ENCODE measurements at regions of chr17 and their contacts with region 1.

Region 1: DNA sequence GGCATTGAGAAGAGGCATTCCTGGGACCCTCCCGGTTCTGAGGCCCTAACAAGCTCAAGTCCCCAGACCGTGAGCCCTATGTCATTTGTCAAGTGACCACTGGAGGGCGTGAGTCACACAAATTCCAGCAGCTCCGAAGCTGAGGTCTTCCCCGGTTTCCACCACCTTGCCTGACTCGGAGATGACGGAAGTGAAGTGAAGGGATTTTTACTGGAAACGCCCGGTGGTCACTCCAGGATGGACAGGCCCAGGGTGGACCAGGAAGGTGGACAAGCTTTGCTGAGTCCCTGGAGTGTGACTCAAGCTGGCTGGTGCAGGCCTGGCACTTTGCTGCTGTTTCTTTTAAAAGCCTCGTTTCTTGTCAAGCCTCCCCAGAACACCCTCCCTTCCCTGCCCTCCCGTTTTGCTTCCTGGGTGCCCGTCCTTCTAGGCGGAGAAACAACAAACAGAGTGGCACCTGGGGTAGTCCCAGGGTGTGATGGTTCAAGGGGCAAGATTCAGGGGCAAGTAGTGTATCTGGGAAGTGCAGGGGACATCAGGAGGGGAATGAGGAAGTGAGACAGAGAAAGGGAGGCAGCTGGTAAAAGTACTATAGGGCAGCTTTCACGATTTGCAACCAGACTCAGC is 5.3 kb upstream of the NOS2 start:
- DNase-seq: peak; percentile 56 to 92 (median 74)
- ATAC-seq: peak; percentile 64 to 77 (median 66)
- H3K4me3 ChIP-seq: peak overlapping the region; percentile 50 to 66
- H3K4me3 Mint-ChIP-seq: peak overlapping the region; percentile 66 to 87 (median 78)
- H3K27ac ChIP-seq: peak overlapping the region; percentile 65
- H3K27ac Mint-ChIP-seq: peak overlapping the region; percentile 91 to 93
- H3K4me1 ChIP-seq: peaks cover 0 to 35% of the 10 kb centered on the region in 2 experiments
- H3K4me1 Mint-ChIP-seq: peaks cover 31 to 46% (median 41%) of the 10 kb centered on the region in 3 donors
- H3K27me3 ChIP-seq: no peaks in the 10 kb centered on the region
- H3K27me3 Mint-ChIP-seq: peaks cover 0 to 2% of the 10 kb centered on the region in 2 donors

Region 2: DNA sequence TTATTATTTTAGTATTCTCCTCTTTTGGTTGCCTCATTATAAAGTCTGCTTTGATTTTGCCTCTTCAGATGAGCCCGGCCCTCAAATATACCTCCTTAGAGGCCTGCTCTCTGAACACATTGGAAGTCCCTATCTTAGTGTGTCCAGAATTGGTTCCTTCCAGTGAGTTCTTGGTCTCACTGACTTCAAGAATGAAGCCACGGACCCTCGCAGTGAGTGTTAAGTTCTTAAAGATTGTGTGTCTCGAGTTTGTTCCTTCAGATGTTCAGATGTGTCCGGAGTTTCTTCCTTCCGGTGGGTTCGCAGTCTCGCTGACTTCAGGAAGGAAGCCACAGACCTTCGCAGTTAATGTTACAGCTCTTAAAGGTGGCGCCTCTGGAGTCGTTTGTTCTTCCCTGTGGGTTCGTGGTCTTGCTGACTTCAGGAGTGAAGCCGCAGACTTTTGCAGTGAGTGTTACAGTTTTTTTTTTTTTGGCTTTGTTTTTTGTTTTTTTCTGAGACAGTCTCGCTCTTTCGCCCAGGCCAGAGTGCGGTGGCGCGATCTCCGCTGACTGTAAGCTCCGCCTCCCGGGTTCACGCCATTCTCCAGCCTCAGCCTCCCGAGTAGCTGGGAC is 40.5 kb after region 1 on chr17:
- CTCF ChIA-PET with region 1: interaction called in 1 of 2 experiments, 16 read pairs
- POLR2A ChIA-PET with region 1: interaction called in 1 of 2 experiments, 3 read pairs
- DNase-seq: peak in 32 of 35 experiments; percentile 1 to 64 (median 22)
- ATAC-seq: peak; percentile 62 to 90 (median 74)
- H3K4me3 ChIP-seq: peak overlapping the region; percentile 25 to 33
- H3K4me3 Mint-ChIP-seq: peak overlapping the region; percentile 77 to 80 (median 77)
- H3K27ac ChIP-seq: peak overlapping the region; percentile 52
- H3K27ac Mint-ChIP-seq: peak overlapping the region; percentile 90 to 95
- H3K4me1 ChIP-seq: peaks cover 0 to 14% of the 10 kb centered on the region in 2 experiments
- H3K4me1 Mint-ChIP-seq: peaks cover 21 to 22% (median 22%) of the 10 kb centered on the region in 3 donors
- H3K27me3 ChIP-seq: no peaks in the 10 kb centered on the region
- H3K27me3 Mint-ChIP-seq: no peaks in the 10 kb centered on the region

Region 3: GRCh38 chr17:27879987-27880608 is 74.5 kb after region 1 on chr17:
- CTCF ChIA-PET with region 1: interaction called, 22 to 47 read pairs
- POLR2A ChIA-PET with region 1: interaction called in 1 of 2 experiments, 4 read pairs
- DNase-seq: peak in 34 of 35 experiments; percentile 23 to 76 (median 52)
- ATAC-seq: peak; percentile 66 to 86 (median 74)
- H3K4me3 ChIP-seq: no peak overlapping the region
- H3K4me3 Mint-ChIP-seq: peak overlapping the region in 1 of 3 donors; percentile 66
- H3K27ac ChIP-seq: no peak overlapping the region
- H3K27ac Mint-ChIP-seq: peak overlapping the region in 1 of 2 donors; percentile 43
- H3K4me1 ChIP-seq: peaks cover 12 to 18% of the 10 kb centered on the region in 2 experiments
- H3K4me1 Mint-ChIP-seq: peaks cover 18 to 22% (median 21%) of the 10 kb centered on the region in 3 donors
- H3K27me3 ChIP-seq: no peaks in the 10 kb centered on the region
- H3K27me3 Mint-ChIP-seq: no peaks in the 10 kb centered on the region

Region 4: DNA sequence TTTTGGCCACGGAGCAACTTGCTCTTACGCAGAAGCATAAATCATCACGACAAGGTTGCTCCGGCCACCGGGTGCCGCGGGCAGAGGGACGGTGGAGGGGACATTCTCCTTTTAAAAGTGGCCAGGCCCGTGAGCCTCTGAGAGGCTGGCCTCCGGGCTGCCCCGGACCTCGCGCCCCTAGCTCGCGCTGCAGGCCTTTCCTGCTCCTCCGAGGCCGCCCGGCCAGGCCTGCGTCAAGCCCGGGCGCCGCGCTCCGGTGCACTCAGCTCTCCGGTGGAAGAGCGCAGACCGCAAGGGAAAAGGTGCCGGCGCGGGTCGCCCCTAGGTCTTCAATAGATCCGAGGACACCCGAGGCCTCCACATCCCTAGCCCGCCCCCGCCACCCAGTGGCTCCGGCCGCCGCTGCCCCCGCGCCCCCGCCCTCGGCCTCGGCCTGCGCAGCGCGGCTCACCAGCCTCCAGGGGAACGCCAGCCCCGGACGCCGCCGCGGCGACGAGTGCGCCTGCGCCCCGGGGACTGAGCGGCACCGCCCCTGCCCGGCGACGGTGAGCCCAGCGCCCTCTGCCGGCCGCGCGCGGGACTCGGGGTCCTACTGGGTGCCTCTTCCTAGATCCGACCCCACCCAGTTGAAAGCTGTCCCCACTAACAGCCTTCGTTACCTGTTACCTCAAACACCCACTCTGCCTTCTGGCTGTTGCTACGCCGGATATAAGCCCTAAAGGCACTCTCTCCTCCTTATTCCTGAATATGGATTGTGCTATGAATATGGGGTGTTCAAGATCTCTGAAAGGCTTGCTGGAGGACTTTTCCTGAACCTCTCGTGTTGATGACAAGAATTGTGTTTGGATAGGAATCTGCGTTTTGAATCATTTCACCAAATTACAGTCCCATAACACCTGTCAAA is 87.5 kb after region 1 on chr17 and contains the start of gene LYRM9:
- CTCF ChIA-PET with region 1: interaction called, 9 to 94 read pairs
- POLR2A ChIA-PET with region 1: interaction called, 3 read pairs
- DNase-seq: peak; percentile 76 to 97 (median 89)
- ATAC-seq: peak; percentile 95 to 99 (median 96)
- H3K4me3 ChIP-seq: peak within 1 kb of the TSS; percentile 62 to 77
- H3K4me3 Mint-ChIP-seq: peak within 1 kb of the TSS; percentile 79 to 86 (median 80)
- H3K27ac ChIP-seq: peak within 1 kb of the TSS; percentile 37
- H3K27ac Mint-ChIP-seq: peak within 1 kb of the TSS; percentile 78 to 81
- H3K4me1 ChIP-seq: peaks cover 2 to 12% of the 10 kb centered on the region in 2 experiments
- H3K4me1 Mint-ChIP-seq: peaks cover 17 to 28% (median 22%) of the 10 kb centered on the region in 3 donors
- H3K27me3 ChIP-seq: peaks cover 0 to 6% of the 10 kb centered on the region in 2 experiments
- H3K27me3 Mint-ChIP-seq: peaks cover 8 to 26% of the 10 kb centered on the region in 2 donors
- total RNA-seq, gene LYRM9: 11.7 to 19.2 (median 14.2) TPM

Region 5: GRCh38 chr17:28169621-28170349 is 364.2 kb after region 1 on chr17:
- CTCF ChIA-PET with region 1: interaction called in 1 of 2 experiments, 3 read pairs
- POLR2A ChIA-PET with region 1: interaction called in 1 of 2 experiments, 10 read pairs
- DNase-seq: no peak
- ATAC-seq: no peak
- H3K4me3 ChIP-seq: no peak overlapping the region
- H3K4me3 Mint-ChIP-seq: no peak overlapping the region
- H3K27ac ChIP-seq: no peak overlapping the region
- H3K27ac Mint-ChIP-seq: no peak overlapping the region
- H3K4me1 ChIP-seq: peaks cover 0 to 20% of the 10 kb centered on the region in 2 experiments
- H3K4me1 Mint-ChIP-seq: peaks cover 20 to 22% (median 20%) of the 10 kb centered on the region in 3 donors
- H3K27me3 ChIP-seq: no peaks in the 10 kb centered on the region
- H3K27me3 Mint-ChIP-seq: no peaks in the 10 kb centered on the region

Region 6: GRCh38 chr17:28252436-28252835 is 446.8 kb after region 1 on chr17:
- CTCF ChIA-PET with region 1: interaction called, 4 to 15 read pairs
- POLR2A ChIA-PET with region 1: no interaction called
- DNase-seq: no peak
- ATAC-seq: no peak
- H3K4me3 ChIP-seq: no peak overlapping the region
- H3K4me3 Mint-ChIP-seq: peak overlapping the region in 1 of 3 donors; percentile 79
- H3K27ac ChIP-seq: no peak overlapping the region
- H3K27ac Mint-ChIP-seq: no peak overlapping the region
- H3K4me1 ChIP-seq: peaks cover 2 to 13% of the 10 kb centered on the region in 2 experiments
- H3K4me1 Mint-ChIP-seq: peaks cover 5 to 14% (median 8%) of the 10 kb centered on the region in 3 donors
- H3K27me3 ChIP-seq: peaks cover 2 to 66% of the 10 kb centered on the region in 2 experiments
- H3K27me3 Mint-ChIP-seq: peaks cover 14 to 19% of the 10 kb centered on the region in 2 donors